ENCODE measurements at regions of chr2 and their contacts with region 1.

Region 1: DNA sequence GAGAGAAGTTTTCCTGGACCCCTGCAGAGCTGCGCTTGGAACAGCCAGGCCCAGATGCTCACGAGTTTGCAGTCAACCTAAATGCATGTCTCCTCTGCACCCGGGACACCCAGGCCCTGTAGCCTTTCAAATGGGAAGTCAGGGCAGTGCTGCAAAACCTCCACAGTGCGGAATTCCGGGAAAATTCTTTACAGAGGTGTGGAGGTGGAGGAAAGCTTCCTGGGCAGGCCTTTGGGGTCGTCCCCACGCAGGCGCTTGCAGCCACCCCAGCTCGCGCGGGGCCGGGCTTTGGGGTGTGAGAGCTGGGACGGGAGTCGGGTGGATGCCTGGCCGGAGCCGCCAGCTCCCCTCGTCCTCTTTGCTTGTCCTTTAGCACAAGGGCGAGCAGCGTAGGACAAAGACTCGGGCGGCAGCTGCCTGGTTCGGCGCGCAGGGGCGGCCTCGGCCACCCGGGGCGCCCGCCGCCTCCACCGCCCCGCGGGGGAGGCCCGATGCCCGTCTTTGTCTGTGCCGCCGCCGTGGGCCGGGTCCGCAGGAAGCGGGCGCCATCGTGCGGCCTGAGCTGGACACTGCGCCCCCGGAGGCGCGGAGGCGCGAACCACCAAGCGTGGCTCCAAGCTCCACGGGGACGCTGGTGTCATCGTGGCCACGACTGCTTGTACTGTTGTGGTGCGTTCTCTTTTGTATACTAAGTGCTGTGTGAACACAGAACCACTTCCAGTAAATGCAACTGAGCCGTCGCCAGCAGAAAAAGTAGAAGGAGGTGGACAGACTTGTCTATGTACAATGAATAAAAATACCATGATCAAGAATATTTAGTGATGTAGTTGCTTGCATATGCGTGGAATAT is 28.2 kb upstream of the BCL11A start:
- DNase-seq: peak; percentile 91
- H3K4me3 Mint-ChIP-seq: no peak overlapping the region
- H3K27ac Mint-ChIP-seq: no peak overlapping the region
- H3K4me1 Mint-ChIP-seq: peaks cover 3% of the 10 kb centered on the region
- H3K27me3 Mint-ChIP-seq: peaks cover 38% of the 10 kb centered on the region

Region 2: DNA sequence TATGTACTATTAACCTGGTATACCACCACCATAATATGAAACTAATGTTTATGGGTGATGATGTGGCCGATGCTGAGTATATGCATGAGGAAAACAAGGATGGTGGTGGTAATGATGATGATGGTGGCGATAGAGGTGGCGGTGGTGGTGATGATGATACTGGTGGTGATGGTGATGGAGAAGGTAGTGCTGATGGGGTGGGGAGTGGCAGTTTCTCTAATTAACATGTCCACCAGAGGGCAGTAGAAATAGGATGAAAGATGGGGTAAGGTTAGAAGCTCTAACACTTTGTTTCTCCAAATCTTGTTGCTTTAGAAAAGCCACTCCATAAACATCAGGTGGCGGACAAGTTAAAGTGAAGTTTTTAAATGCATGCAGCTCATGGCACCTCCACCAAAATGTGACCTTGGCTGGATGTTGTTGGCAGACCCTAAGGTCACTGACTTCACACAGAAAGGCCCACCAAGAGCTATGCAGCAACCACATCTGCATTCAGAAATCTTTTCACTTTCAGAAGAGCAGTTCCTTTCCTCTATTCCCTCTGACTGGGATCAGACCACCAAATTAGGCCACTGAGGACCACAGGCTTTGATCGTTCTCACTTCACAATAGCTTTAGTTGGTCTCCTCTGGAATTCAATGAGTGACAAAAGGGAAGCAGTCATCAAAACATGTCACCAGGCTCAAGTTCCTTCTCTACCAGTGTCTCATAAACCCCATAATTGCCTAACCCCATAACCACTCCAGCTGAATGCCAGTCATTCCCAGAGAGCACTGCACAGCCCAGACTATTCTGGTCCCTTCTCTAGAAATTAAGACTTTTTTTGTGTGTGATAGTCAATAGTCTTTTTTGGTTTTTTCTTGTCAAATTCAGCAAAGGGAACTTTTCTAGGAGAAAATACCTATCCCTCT is 20.7 kb before region 1 on chr2:
- intact Hi-C with region 1: loop called (anchors 2 kb)
- DNase-seq: peak; percentile 72
- H3K4me3 Mint-ChIP-seq: no peak overlapping the region
- H3K27ac Mint-ChIP-seq: no peak overlapping the region
- H3K4me1 Mint-ChIP-seq: peaks cover 6% of the 10 kb centered on the region
- H3K27me3 Mint-ChIP-seq: peaks cover 75% of the 10 kb centered on the region

Region 3: DNA sequence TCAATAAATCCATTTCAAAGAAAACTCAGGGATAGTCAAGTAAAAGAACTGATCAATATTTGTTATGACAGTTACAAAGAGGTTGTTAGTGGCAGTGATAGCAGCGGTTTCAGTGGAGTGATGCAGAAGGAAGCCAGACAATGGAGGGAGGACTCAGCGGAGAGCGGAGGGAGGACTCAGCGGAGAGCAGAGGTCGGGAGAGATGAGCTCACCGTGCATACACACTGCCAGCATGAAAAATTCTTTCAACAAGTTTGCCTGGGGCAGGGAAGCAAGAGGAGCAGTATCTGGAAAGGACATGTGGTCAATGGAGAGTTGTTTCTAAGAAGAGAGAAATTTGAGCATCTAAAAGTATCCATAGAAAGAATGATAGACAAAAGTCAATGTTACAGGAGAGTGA is 32.7 kb after region 1 on chr2:
- intact Hi-C with region 1: no loop called
- DNase-seq: no peak
- H3K4me3 Mint-ChIP-seq: no peak overlapping the region
- H3K27ac Mint-ChIP-seq: no peak overlapping the region
- H3K4me1 Mint-ChIP-seq: no peaks in the 10 kb centered on the region
- H3K27me3 Mint-ChIP-seq: peaks cover 7% of the 10 kb centered on the region

Measured in activated CD4-positive, alpha-beta T cell treated with anti-CD3 and anti-CD28 coated beads, Interleukin-2, amount 10 ng/mL, durations not matched to agents 24 days and 14 days (primary cell).